Heart right ventricle (tissue), 16 donors: ENCODE measurements at regions of chr7 and their contacts with region 1.

Region 1: DNA sequence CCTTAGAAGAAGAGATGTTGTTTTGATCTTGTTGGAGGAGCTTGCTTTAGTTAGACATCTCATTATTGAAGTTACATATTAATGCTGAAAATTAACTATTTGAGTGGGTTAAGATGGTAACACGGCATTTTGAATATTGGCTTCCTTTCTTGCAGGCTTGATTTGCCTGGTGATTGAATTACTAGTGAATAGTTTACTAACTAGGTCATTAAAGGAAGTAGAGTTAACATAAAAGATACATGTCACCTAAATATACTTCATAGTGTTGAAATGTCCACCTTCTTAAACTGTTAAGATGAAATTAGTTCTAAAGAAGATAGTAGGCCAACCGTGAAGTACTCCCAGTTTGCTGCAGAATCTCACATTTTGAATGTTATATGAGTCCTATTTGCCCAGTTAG is 18.5 kb downstream of the MPLKIP start:
- DNase-seq: no peak
- ATAC-seq: no peak
- H3K4me3 ChIP-seq: no peak overlapping the region
- H3K27ac ChIP-seq: no peak overlapping the region
- H3K4me1 ChIP-seq: no peaks in the 10 kb centered on the region
- H3K27me3 ChIP-seq: no peaks in the 10 kb centered on the region
- CTCF ChIP-seq: no peak

Region 2: GRCh38 chr7:40147371-40148246 is 31.7 kb after region 1 on chr7:
- intact Hi-C with region 1: loop called in 1 of 10 experiments (anchors 1 kb)
- DNase-seq: no peak
- ATAC-seq: no peak
- H3K4me3 ChIP-seq: no peak overlapping the region
- H3K27ac ChIP-seq: no peak overlapping the region
- H3K4me1 ChIP-seq: no peaks in the 10 kb centered on the region
- H3K27me3 ChIP-seq: no peaks in the 10 kb centered on the region
- CTCF ChIP-seq: no peak

Region 3: GRCh38 chr7:40403703-40404476 is 287.9 kb after region 1 on chr7:
- intact Hi-C with region 1: no loop called
- DNase-seq: no peak
- ATAC-seq: no peak
- H3K4me3 ChIP-seq: no peak overlapping the region
- H3K27ac ChIP-seq: no peak overlapping the region
- H3K4me1 ChIP-seq: no peaks in the 10 kb centered on the region
- H3K27me3 ChIP-seq: no peaks in the 10 kb centered on the region
- CTCF ChIP-seq: no peak